ENCODE measurements at regions of chr17 and their contacts with region 1.

Region 1: DNA sequence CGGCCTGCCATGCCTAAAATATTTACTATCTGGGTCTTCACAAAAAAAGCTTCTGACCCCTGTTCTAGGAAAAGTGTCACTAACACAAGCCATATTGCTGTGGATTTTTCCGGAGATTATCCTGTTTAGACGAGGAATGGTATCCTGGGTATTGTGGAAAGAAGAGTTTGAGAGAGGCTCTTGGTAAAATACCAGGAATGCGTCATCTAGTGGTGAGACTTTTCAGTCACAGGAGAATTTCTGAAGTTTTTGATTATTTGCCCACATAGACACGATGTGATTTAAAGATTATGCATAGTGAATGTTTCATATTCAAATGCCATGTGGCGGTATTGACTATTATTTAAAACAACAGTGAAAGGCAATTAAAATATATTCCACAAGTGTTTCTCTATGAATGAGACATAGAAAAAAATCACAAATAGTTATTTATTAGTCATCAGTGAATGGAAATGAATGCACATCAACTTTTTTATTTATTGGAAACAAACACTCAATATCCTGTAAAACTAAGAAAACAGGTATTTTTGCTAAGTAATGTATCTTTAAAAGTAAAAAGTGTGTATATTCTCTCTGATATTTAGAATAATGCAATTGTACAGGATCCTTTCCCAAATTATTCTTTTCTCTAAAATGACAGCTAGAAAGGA is 7.8 kb downstream of the KRT28 start:
- H3K4me3 Mint-ChIP-seq: no peak overlapping the region
- H3K27ac Mint-ChIP-seq: no peak overlapping the region
- H3K4me1 Mint-ChIP-seq: no peaks in the 10 kb centered on the region
- H3K27me3 Mint-ChIP-seq: peaks cover 43% of the 10 kb centered on the region

Region 2: DNA sequence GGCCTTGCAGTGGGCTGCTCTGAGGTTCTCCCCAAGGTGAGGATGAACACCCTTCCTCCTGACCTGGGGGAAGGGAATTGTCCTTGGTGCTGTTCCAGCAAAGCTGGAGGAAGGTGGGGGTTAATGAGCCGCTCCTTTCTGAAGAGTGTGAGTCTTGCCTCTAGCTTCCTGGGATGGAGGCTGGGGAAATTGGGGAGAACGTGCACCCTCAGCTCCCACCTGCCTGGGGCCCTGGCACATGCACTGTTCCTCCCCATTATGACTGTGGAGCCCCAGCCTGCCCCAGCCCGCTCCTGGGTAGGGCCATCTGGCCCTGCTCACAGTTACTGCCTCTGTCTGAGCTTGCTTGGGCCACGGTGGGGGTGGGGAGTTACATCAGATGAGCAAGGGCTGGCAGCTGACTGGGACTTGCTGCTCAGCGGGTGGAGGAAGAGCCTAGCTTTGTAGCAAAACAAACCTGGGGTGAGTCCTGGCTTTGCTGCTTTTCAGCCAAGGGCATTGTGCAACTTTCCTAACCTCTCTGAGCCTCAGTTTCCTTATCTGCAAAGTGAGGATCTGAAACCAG is 301.5 kb before region 1 on chr17:
- intact Hi-C with region 1: no loop called
- H3K4me3 Mint-ChIP-seq: no peak overlapping the region
- H3K27ac Mint-ChIP-seq: no peak overlapping the region
- H3K4me1 Mint-ChIP-seq: peaks cover 14% of the 10 kb centered on the region
- H3K27me3 Mint-ChIP-seq: peaks cover 34% of the 10 kb centered on the region

Region 3: GRCh38 chr17:40622509-40622928 is 169.4 kb before region 1 on chr17:
- intact Hi-C with region 1: loop called (anchors 10 kb)
- H3K4me3 Mint-ChIP-seq: no peak overlapping the region
- H3K27ac Mint-ChIP-seq: no peak overlapping the region
- H3K4me1 Mint-ChIP-seq: peaks cover 21% of the 10 kb centered on the region
- H3K27me3 Mint-ChIP-seq: peaks cover 27% of the 10 kb centered on the region